ENCODE measurements at regions of chr2 and their contacts with region 1.

Region 1: GRCh38 chr2:213151437-213152064 is at the start of gene IKZF2:
- DNase-seq: peak; percentile 57
- H3K4me3 Mint-ChIP-seq: peak within 1 kb of the TSS; percentile 87
- H3K27ac Mint-ChIP-seq: peak within 1 kb of the TSS; percentile 81
- H3K4me1 Mint-ChIP-seq: peaks cover 31% of the 10 kb centered on the region
- H3K27me3 Mint-ChIP-seq: peaks cover 40% of the 10 kb centered on the region
- total RNA-seq, gene IKZF2: 2.8 and 3.2 TPM in 2 replicates

Region 2: DNA sequence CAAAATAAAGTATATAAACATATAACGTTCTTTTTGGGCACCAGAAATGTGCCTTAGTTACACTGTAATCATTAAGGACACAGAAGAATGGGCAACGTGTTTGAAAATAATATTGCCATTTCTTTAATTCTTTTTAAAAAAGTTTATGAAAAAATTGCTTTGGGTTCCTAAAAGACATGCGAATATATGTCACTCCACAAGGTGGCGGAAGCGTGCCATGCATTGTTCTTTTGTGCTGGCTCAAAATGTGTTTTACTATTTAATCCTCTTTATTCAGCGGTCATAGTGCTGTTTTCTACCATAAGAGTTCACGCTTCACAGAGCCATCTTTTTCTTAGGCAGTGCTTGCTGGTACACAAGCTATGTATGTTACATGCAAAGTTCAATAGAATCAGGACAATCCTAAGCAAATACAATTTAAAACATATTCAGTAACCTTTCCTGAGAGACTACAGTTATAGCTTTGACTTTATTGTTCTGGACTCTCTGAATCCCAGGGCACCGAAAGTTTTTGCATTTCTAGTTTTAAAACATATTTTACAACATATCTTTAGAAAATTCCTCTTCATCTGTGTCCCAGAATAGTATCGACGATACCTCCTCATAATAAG is 465.2 kb before region 1 on chr2:
- intact Hi-C with region 1: loop called (anchors 1 kb)
- DNase-seq: peak; percentile 3
- H3K4me3 Mint-ChIP-seq: no peak overlapping the region
- H3K27ac Mint-ChIP-seq: no peak overlapping the region
- H3K4me1 Mint-ChIP-seq: no peaks in the 10 kb centered on the region
- H3K27me3 Mint-ChIP-seq: peaks cover under 1% of the 10 kb centered on the region

Region 3: DNA sequence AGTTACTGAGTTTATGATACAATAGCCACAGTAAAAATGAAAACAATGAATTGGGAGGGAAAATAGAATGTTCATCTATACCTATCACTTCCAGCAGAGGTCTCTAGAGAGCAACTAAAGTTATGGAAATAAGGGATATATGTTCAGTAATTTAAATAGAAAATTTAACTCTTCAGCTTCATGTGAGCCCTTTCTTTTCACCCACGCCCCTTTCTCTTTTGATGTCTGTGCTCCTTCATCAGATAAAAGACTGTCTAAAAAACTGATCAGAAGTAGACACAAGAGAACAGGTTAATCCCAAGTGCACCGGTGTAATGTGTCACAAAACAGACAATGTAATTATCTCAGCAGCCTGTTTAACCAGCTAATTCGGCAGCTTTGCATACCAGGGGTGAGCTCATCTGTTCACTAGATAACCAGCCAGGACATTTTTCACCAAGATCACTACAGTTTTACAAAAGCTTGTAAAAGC is 374.5 kb before region 1 on chr2:
- intact Hi-C with region 1: loop called (anchors 1 kb)
- DNase-seq: no peak
- H3K4me3 Mint-ChIP-seq: no peak overlapping the region
- H3K27ac Mint-ChIP-seq: no peak overlapping the region
- H3K4me1 Mint-ChIP-seq: no peaks in the 10 kb centered on the region
- H3K27me3 Mint-ChIP-seq: no peaks in the 10 kb centered on the region

Region 4: DNA sequence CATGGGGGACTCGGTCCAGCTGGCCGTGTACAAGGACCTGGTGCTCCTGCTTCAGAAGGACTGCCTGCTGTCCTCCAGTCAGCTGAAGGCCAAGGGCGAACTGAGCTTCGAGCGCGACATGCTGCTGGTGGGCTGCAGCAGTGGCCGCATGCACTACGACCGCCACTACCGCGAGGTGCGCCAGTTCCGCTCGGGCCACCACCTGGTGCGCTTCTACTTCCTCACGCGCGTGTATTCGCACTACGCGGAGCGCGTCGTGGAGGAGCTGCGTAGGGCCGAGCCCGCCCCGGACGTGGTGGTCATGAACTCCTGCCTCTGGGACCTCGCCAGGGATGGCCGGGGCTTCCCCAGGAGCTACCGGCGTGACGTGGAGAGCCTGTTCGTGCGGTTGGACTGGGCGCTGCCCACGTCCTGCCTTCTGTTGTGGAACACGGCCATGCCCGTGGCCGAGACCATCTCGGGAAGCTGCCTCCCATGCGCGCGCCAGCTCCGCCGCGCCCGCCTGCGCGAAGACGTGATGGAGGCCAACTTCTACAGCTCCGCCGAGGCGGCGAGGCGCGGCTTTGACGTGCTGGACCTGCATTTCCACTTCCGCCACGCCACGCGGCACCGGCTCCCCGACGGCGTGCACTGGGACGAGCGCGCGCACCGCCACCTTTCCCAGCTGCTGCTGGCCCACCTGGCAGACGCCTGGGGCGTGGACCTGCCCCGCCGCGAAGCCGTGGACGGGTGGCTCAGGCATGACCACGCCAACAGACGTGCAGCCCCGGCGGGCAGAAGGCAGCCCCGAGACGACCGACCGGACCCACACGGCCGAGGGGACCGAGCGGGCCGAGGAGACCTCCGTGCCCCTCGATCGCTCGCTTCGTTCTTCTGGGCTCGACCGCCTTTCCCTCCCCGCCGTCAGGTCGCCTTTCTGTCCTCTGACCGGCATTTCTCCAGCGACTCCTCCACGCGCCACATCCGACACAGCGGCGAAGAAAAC is 319.0 kb before region 1 on chr2:
- intact Hi-C with region 1: no loop called
- DNase-seq: no peak
- H3K4me3 Mint-ChIP-seq: no peak overlapping the region
- H3K27ac Mint-ChIP-seq: no peak overlapping the region
- H3K4me1 Mint-ChIP-seq: no peaks in the 10 kb centered on the region
- H3K27me3 Mint-ChIP-seq: peaks cover 2% of the 10 kb centered on the region

Region 5: GRCh38 chr2:212863185-212863588 is 288.4 kb before region 1 on chr2:
- intact Hi-C with region 1: loop called (anchors 1 kb)
- DNase-seq: no peak
- H3K4me3 Mint-ChIP-seq: no peak overlapping the region
- H3K27ac Mint-ChIP-seq: no peak overlapping the region
- H3K4me1 Mint-ChIP-seq: no peaks in the 10 kb centered on the region
- H3K27me3 Mint-ChIP-seq: no peaks in the 10 kb centered on the region

Region 6: GRCh38 chr2:213119061-213119856 is 32.3 kb before region 1 on chr2:
- intact Hi-C with region 1: loop called (anchors 2 kb)
- DNase-seq: no peak
- H3K4me3 Mint-ChIP-seq: no peak overlapping the region
- H3K27ac Mint-ChIP-seq: peak overlapping the region; percentile 56
- H3K4me1 Mint-ChIP-seq: peaks cover 14% of the 10 kb centered on the region
- H3K27me3 Mint-ChIP-seq: peaks cover 1% of the 10 kb centered on the region

Region 7: DNA sequence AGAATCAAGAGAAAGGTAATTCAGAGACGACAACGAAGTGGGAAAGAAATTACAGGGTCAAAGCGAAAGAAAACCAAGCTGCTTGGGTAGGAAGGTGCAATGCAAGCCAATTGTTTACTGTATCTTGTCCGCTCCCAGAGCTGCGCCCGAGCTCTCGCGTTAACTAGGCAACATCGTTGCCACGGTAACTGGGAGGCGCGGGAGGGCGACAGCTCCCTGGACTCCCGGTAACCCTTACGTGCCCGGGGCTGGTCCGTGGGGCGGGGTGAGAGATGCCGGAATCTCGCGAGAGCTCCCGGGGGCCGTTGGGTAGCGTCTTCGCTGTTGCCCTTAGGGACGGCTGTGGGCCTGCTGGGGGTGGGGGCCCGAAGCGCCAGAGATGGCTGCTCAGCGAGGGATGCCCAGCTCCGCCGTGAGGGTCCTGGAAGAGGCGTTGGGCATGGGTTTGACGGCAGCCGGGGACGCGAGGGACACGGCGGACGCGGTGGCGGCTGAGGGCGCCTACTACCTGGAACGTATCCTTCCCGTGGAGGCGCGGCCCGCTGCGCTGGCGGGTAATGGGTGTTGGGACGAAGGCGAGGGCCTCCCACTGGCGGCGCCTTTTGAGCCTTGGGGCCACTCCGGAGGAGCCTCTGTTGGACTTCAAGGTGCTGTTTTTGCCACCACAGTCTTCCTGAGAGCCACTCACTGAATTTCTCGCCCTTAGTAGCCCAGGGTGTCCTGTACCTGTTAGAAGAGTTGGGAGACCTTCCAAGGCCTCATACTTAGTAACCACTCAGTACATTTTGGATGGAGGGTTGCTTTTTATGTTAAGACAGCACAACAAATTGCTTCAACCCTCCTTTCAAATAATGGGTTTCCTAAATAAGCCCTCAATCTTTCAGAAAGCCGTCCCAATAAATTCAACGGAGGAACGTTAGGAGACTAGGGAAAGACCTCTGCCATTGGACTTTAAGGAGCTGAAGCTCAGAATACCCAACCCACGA is 132.8 kb after region 1 on chr2 and contains the start of gene SPAG16:
- intact Hi-C with region 1: loop called (anchors 2 kb)
- DNase-seq: peak; percentile 98
- H3K4me3 Mint-ChIP-seq: peak within 1 kb of the TSS; percentile 90
- H3K27ac Mint-ChIP-seq: peak within 1 kb of the TSS; percentile 84
- H3K4me1 Mint-ChIP-seq: peaks cover 25% of the 10 kb centered on the region
- H3K27me3 Mint-ChIP-seq: peaks cover 2% of the 10 kb centered on the region
- total RNA-seq, gene SPAG16: 7.3 TPM in 2 replicates